ENCODE measurements at regions of chr10 and their contacts with region 1.

Region 1: DNA sequence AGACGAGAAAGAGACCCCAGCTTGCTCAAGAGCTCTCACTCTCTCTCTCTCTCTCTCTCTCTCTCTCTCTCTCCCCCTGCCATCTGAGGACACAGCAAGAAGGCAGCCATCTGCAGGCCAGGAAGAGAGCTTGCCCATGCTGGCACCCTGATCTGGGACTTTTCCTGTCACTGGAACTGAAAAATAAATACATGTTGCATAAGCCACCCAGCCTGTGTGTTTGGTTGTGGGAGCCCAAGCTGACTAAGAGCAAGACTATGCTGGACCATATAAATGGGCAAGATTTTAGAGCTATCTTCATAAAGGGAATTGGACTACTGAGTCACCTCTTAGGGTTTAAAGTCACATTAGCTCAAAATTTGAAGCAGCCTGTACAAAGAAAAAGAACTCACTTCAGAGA is 98.6 kb downstream of the SLC16A9 start:
- DNase-seq: no peak
- ATAC-seq: no peak
- H3K4me3 ChIP-seq: no peak overlapping the region
- H3K27ac ChIP-seq: no peak overlapping the region
- H3K4me1 ChIP-seq: no peaks in the 10 kb centered on the region
- H3K27me3 ChIP-seq: no peaks in the 10 kb centered on the region
- CTCF ChIP-seq: no peak

Region 2: DNA sequence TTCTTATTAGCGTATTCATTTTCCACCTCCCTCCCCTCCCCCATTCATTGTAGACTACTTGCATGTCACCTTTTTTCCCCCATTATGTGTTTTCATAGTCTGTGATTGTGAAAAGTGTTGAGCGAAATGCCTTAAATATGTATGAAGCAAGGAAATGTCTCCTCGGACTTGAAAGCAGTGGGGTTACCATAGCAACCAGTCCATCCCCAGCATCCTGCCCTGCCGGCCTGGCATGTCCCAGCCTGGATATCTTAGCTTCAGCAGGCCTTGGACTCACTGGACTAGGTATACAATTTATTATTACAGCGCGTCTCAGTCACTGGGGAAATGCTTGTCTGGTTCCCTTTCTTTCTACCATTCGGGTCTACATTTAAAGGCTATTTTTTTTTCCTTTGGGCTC is 814.8 kb before region 1 on chr10:
- intact Hi-C with region 1: loop called in 1 of 3 experiments (anchors 10 kb)
- DNase-seq: no peak
- ATAC-seq: no peak
- H3K4me3 ChIP-seq: no peak overlapping the region
- H3K27ac ChIP-seq: no peak overlapping the region
- H3K4me1 ChIP-seq: no peaks in the 10 kb centered on the region
- H3K27me3 ChIP-seq: no peaks in the 10 kb centered on the region
- CTCF ChIP-seq: no peak

Region 3: DNA sequence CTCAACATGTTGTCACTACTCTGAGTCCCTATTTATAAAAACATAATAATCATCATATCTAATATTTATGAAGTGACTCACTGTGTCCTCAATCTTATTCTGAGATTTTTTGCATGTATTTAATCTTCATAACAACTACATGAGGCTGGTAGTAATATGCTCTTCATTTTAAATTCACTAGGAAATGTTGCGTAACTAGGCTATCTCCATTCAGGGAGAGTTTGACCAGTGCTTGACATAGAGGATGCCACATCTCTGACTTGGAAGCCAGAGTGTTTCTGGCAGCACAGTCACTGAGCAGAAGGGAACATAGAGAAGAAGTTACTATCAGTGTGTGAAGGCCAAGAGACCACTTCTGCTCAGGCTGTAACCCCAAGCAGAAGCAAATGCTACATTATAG is 337.6 kb before region 1 on chr10:
- intact Hi-C with region 1: no loop called
- DNase-seq: no peak
- ATAC-seq: no peak
- H3K4me3 ChIP-seq: no peak overlapping the region
- H3K27ac ChIP-seq: no peak overlapping the region
- H3K4me1 ChIP-seq: no peaks in the 10 kb centered on the region
- H3K27me3 ChIP-seq: no peaks in the 10 kb centered on the region
- CTCF ChIP-seq: no peak